Caco-2 (cell line): ENCODE measurements at regions of chr1 and their contacts with region 1.

Region 1: DNA sequence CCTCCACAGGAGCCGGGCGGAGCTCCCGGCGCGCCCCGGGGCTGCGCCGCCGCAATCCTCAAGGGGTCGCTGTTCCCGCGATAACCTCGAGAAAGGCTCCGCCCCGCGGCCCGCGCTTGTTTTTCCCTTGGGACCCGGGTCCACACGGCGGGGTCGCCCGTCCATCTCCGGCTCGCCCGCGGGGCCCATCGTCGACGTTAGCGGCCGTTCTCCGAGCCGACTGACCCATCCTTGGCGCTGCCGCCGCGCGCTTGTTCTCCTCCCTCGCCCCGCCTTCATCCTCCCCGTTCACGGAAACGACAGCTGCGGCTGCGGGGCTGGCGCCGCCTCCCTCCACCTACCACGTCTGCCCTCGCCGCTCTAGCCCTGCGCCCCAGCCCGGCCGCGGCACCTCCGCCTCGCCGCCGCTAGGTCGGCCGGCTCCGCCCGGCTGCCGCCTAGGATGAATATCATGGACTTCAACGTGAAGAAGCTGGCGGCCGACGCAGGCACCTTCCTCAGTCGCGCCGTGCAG is at the start of gene SH3GLB1:
- DNase-seq: peak; percentile 91 to 92
- H3K4me3 ChIP-seq: peak within 1 kb of the TSS; percentile 82
- H3K4me3 Mint-ChIP-seq: peak within 1 kb of the TSS; percentile 98
- H3K27ac Mint-ChIP-seq: peak within 1 kb of the TSS; percentile 95
- H3K4me1 ChIP-seq: peaks cover 10% of the 10 kb centered on the region
- H3K4me1 Mint-ChIP-seq: peaks cover 7% of the 10 kb centered on the region
- H3K27me3 ChIP-seq: no peaks in the 10 kb centered on the region
- H3K27me3 Mint-ChIP-seq: no peaks in the 10 kb centered on the region
- CTCF ChIP-seq: peak; percentile 68 to 76
- total RNA-seq, gene SH3GLB1: 48.7 and 50.6 TPM in 2 replicates

Region 2: DNA sequence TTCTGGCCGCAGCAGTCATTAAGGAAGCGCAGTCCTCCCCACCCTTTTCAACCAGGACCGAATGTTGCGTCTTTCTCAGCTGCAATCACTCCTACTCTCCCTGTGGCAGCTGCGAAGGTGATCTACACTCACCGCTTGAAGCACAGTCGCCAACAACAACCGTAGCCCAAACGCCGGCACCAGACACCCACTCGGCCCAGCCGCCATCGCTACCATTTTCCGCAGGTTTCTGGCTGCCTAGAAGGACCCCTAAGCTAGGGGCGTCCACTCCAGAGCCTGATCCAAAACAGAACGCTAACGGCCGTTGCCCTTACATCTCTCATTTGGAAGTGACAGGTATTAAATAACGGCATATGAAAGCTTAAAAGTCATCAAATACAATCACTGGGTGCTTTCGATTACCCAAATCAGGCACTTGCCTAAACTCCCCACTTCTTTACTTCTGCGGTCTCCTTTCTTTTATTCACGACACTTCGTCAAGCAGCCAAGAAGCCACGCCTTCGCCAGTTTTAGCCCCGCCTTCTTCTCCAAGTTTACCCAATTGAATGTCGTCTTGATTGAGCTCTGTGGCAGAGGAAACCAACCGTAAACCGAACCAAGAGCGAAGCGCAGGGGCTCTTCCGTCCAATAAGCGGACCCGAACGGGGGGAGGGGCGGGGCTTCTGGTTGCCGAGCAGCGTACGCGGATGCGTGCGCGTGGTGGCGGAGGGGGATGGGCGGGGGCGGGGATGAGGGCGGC is 209.6 kb after region 1 on chr1 and contains the start of gene SELENOF:
- CTCF ChIA-PET with region 1: interaction called, 5 read pairs
- POLR2A ChIA-PET with region 1: interaction called, 8 read pairs
- intact Hi-C with region 1: loop called (anchors 10 kb)
- DNase-seq: peak; percentile 96 to 98
- H3K4me3 ChIP-seq: peak within 1 kb of the TSS; percentile 92
- H3K4me3 Mint-ChIP-seq: no peak within 1 kb of the TSS
- H3K27ac Mint-ChIP-seq: no peak within 1 kb of the TSS
- H3K4me1 ChIP-seq: no peaks in the 10 kb centered on the region; the same call in none of the 2 replicates
- H3K4me1 Mint-ChIP-seq: peaks cover 11% of the 10 kb centered on the region
- H3K27me3 ChIP-seq: no peaks in the 10 kb centered on the region
- H3K27me3 Mint-ChIP-seq: no peaks in the 10 kb centered on the region
- CTCF ChIP-seq: no peak
- total RNA-seq, gene SELENOF: 161 and 166 TPM in 2 replicates

Region 3: GRCh38 chr1:87084244-87084836 is 379.8 kb after region 1 on chr1:
- CTCF ChIA-PET with region 1: no interaction called
- POLR2A ChIA-PET with region 1: no interaction called
- intact Hi-C with region 1: loop called (anchors 10 kb)
- DNase-seq: no peak
- H3K4me3 ChIP-seq: no peak overlapping the region
- H3K4me3 Mint-ChIP-seq: no peak overlapping the region
- H3K27ac Mint-ChIP-seq: no peak overlapping the region
- H3K4me1 ChIP-seq: no peaks in the 10 kb centered on the region
- H3K4me1 Mint-ChIP-seq: no peaks in the 10 kb centered on the region
- H3K27me3 ChIP-seq: no peaks in the 10 kb centered on the region
- H3K27me3 Mint-ChIP-seq: no peaks in the 10 kb centered on the region
- CTCF ChIP-seq: peak; percentile 5 to 29